ENCODE measurements at regions of chr2 and their contacts with region 1.

Region 1: DNA sequence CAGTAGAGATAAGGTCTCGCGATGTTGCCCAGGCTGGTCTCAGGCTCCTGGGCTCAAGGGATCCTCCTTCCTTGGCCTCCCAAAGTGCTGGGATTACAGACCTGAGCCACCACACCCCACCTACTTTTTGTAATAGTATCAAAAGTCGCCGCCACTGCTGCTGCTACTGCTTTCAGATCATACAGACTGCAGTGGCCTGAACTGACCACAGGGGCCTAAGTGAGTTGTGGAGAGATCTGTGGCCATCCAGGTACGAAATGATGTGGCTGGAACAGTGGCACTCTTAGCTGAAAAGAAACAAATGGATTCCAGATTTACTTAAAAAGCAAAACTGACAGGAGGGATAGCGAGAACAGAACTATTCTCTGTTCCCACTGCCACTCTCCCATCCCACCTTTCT is 32.9 kb upstream of the POMC start:
- DNase-seq: no peak
- H3K4me3 ChIP-seq: no peak overlapping the region
- H3K27ac ChIP-seq: no peak overlapping the region
- H3K4me1 ChIP-seq: peaks cover 8% of the 10 kb centered on the region
- H3K27me3 ChIP-seq: peaks cover 2% of the 10 kb centered on the region
- CTCF ChIP-seq: peak in 1 of 2 donors; percentile 29

Region 2: DNA sequence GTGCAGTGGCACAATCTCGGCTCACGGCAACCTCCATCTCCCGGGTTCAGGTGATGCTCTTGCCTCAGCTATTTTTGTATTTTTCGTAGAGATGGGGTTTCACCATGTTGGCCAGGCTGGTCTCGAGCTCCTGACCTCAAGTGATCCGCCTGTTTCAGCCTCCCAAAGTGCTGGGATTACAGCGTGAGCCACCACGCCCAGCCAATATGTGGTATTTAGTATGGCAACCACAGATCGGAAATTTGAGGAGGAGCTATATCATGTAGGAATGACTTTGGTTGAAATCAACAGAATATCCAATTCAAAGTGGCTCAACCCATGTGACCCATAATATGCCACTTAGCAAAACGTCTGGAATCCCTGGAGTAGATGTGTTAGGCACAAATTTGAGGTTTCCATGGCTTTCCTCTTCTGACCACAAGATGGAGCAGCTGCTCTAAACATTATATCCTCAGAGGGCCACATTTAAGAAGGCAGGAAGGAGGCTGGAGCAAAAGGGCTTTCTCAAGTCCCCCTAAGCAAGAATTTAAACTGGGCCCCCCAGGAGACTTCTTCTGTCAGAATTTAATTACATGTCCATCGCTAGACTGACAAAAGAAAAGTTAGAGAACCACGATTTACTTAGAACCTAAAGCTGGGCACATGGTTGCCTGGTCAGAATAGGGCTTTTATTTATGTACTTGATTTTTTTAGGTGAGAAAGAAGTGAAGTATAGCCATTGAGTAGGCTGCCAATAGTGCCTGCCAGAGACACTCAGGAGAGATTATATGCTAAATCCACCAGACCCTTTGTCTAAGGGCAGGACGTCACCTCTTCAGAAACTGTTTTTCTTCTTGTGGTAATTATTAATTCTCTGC is 791.3 kb before region 1 on chr2:
- CTCF ChIA-PET with region 1: no interaction called
- dilution Hi-C with region 1: no loop called
- in situ Hi-C with region 1: no loop called
- intact Hi-C with region 1: loop called (anchors 1 kb)
- DNase-seq: peak; percentile 49
- H3K4me3 ChIP-seq: no peak overlapping the region
- H3K27ac ChIP-seq: no peak overlapping the region
- H3K4me1 ChIP-seq: peaks cover 1% of the 10 kb centered on the region
- H3K27me3 ChIP-seq: no peaks in the 10 kb centered on the region
- CTCF ChIP-seq: peak; percentile 81 to 84

Region 3: GRCh38 chr2:25567406-25567805 is 366.1 kb after region 1 on chr2:
- CTCF ChIA-PET with region 1: no interaction called
- dilution Hi-C with region 1: no loop called
- in situ Hi-C with region 1: no loop called
- intact Hi-C with region 1: loop called (anchors 5 kb)
- DNase-seq: peak; percentile 17
- H3K4me3 ChIP-seq: no peak overlapping the region
- H3K27ac ChIP-seq: no peak overlapping the region
- H3K4me1 ChIP-seq: no peaks in the 10 kb centered on the region
- H3K27me3 ChIP-seq: no peaks in the 10 kb centered on the region
- CTCF ChIP-seq: peak; percentile 19 to 42